ENCODE measurements at regions of chr10 and their contacts with region 1.

Region 1: GRCh38 chr10:117216611-117217195 is 19.4 kb downstream of the KCNK18 start:
- DNase-seq: peak; percentile 65
- H3K4me3 ChIP-seq: peak overlapping the region in 3 of 4 donors; percentile 24 to 58 (median 42)
- H3K27ac ChIP-seq: no peak overlapping the region
- H3K4me1 ChIP-seq: peaks cover 0 to 13% (median 12%) of the 10 kb centered on the region in 4 donors
- H3K27me3 ChIP-seq: peaks cover 71% of the 10 kb centered on the region
- CTCF ChIP-seq: peak; percentile 98 to 100 (median 100)
- EP300 ChIP-seq: no peak
- POLR2A ChIP-seq: no peak

Region 2: DNA sequence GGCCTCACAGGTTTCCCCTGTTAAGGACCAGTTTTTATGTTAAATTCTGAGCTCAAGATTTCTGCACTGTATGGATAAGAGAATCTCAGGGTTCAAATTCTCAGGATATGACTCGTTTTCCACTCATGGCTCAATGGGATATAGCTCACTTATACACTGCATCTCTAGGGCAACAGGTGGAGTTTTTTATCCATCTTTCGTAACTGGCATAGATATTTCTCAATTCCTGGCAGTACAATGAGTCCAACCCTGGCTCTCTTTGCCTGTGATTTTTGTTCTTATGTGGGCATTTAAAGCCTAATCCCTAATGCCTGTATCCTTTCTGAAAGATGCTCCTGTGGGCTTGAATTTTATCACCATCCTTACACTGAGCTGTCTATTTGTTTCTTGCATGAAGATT is 884.9 kb before region 1 on chr10:
- in situ Hi-C with region 1: no loop called
- intact Hi-C with region 1: no loop called
- DNase-seq: no peak
- H3K4me3 ChIP-seq: no peak overlapping the region
- H3K27ac ChIP-seq: no peak overlapping the region
- H3K4me1 ChIP-seq: no peaks in the 10 kb centered on the region
- H3K27me3 ChIP-seq: no peaks in the 10 kb centered on the region
- CTCF ChIP-seq: no peak
- EP300 ChIP-seq: no peak
- POLR2A ChIP-seq: no peak

Region 3: DNA sequence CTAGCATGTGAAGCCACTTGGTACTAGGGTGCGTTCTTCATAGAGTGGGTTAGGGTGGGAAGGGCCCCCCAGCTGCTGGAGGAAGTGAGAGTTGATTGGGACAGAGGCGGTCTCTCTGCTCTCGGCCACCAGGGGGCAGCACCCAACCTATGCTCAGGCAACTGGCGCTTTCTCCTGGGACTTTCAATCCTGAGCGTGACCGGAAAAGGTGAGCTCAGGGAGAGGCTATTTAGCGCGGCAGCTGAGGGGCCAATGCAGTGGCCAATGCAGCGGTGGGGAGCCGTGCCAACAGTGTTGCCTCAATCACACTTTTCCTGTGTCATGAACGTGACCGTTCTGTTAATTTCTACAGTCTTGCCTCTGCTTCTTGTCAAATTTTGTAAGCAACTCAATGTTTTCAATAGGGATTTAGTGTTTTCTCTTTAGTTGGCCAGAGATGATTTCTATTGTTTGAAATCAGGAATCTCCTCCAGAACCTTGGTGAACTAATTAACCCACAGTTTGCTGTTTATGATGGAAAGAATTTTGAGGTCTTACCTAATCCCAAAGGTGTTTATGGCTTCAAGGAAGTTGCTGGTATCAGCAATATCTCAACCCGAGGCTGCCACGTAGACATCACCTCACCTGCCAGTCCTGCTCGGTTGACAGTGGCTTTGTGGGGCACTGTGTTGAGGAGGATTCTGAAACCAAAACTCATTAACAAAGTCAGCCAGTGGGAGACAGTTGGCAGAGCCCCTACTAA is 226.4 kb after region 1 on chr10:
- in situ Hi-C with region 1: loop called in 2 of 4 experiments (anchors 25 kb)
- intact Hi-C with region 1: no loop called
- DNase-seq: peak; percentile 85
- H3K4me3 ChIP-seq: peak overlapping the region in 2 of 4 donors; percentile 10 to 21
- H3K27ac ChIP-seq: peak overlapping the region in 2 of 4 donors; percentile 46
- H3K4me1 ChIP-seq: peaks cover 0 to 5% (median 0%) of the 10 kb centered on the region in 4 donors
- H3K27me3 ChIP-seq: no peaks in the 10 kb centered on the region
- CTCF ChIP-seq: peak; percentile 84 to 95 (median 88)
- EP300 ChIP-seq: no peak
- POLR2A ChIP-seq: no peak

Region 4: DNA sequence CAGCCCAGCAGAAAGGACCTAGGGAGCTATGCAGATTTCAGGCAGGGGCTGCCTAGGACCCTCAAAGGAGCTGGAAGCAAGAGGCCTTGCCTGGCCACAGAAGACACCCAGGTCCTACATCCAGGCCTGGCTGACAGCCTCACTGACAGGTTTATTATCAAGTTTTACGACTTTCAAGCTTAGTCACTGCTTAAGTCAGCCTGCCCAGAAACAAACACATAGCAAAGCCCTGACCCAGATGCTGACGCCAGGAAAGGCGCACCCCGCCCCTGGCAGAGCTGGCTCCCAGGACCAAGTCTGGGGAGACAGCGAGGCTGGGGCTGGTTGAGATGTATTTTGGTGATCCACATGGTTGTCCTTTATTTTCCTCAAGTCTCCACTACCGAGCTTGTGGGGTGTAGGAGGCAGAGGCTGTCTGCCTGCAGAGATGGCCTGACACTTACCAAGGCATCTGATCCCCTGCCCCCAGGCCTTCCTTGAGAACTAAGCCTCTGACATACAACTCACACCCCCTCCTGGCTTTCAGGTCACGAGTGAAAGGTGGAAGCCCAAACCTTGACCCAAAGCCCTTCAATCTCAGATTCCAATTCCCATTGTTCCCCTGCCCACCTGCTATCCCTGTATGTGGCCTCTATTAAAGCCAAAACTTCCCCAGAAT is 245.2 kb after region 1 on chr10:
- in situ Hi-C with region 1: loop called in 1 of 4 experiments (anchors 25 kb)
- intact Hi-C with region 1: no loop called
- DNase-seq: peak; percentile 76
- H3K4me3 ChIP-seq: no peak overlapping the region
- H3K27ac ChIP-seq: peak overlapping the region; percentile 79 to 89 (median 82)
- H3K4me1 ChIP-seq: peaks cover 5 to 15% (median 7%) of the 10 kb centered on the region in 4 donors
- H3K27me3 ChIP-seq: no peaks in the 10 kb centered on the region
- CTCF ChIP-seq: no peak
- EP300 ChIP-seq: peak; percentile 82
- POLR2A ChIP-seq: no peak